ENCODE measurements at regions of chr20 and their contacts with region 1.

Region 1: DNA sequence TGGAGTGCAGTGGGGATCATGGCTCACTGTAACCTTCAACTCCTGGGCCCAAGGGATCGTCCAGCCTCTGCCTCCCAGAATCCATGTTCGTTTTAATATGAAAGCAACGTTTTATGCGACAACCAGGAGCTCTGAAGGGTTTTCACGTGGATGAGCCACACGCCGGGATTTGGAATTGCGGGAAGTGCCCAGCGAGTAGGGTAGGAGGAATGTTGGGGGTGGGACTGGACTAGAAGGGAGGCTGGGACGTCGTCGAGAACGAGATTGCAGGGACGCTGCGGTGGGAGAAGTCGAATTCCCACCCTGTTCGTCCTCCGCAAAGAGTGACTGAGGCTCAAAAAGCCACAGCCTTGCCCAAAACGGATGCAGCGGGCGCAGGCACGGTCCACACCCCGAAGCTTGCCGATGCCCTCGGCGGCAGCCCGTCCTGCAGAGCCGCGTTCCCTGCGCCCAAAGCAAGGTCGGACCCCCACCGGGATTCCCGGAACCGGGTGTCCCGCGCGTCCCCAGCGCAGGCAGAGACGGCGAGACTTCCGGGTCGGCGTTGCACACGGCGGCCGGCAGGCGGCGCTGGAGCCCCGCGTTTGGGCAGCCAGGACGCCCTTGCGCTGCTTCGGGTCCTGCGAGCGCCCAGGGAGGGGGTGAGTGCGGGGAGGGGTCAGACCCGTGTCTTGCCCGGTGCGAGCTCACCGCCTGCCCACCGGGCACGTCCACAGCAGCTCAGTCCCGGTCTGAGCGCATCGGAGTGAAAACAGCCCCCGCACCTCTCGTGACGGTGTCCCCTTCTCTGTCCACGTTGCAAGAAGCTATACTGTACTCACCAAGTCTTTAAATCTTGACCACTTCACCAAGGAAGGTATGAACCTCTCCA is 87.8 kb downstream of the DHX35 start:
- DNase-seq: peak; percentile 90 to 97
- H3K4me3 ChIP-seq: peak overlapping the region; percentile 88
- H3K4me3 Mint-ChIP-seq: peak overlapping the region; percentile 82
- H3K27ac Mint-ChIP-seq: peak overlapping the region; percentile 65
- H3K4me1 ChIP-seq: peaks cover 4% of the 10 kb centered on the region; the same call in 1 of the 2 replicates
- H3K4me1 Mint-ChIP-seq: no peaks in the 10 kb centered on the region
- H3K27me3 ChIP-seq: no peaks in the 10 kb centered on the region
- H3K27me3 Mint-ChIP-seq: peaks cover 13% of the 10 kb centered on the region
- CTCF ChIP-seq: peak; percentile 100

Region 2: GRCh38 chr20:38645980-38646858 is 403.7 kb before region 1 on chr20:
- CTCF ChIA-PET with region 1: no interaction called
- POLR2A ChIA-PET with region 1: no interaction called
- intact Hi-C with region 1: loop called (anchors 1 kb)
- DNase-seq: peak; percentile 85 to 97
- H3K4me3 ChIP-seq: peak overlapping the region; percentile 28
- H3K4me3 Mint-ChIP-seq: peak overlapping the region; percentile 69
- H3K27ac Mint-ChIP-seq: no peak overlapping the region
- H3K4me1 ChIP-seq: 0 out of 2 replicates have a peak, but pooled peaks cover 8% of the 10 kb centered on the region
- H3K4me1 Mint-ChIP-seq: no peaks in the 10 kb centered on the region
- H3K27me3 ChIP-seq: peaks cover 2% of the 10 kb centered on the region; the same call in 1 of the 2 replicates
- H3K27me3 Mint-ChIP-seq: peaks cover 19% of the 10 kb centered on the region
- CTCF ChIP-seq: peak; percentile 100

Region 3: DNA sequence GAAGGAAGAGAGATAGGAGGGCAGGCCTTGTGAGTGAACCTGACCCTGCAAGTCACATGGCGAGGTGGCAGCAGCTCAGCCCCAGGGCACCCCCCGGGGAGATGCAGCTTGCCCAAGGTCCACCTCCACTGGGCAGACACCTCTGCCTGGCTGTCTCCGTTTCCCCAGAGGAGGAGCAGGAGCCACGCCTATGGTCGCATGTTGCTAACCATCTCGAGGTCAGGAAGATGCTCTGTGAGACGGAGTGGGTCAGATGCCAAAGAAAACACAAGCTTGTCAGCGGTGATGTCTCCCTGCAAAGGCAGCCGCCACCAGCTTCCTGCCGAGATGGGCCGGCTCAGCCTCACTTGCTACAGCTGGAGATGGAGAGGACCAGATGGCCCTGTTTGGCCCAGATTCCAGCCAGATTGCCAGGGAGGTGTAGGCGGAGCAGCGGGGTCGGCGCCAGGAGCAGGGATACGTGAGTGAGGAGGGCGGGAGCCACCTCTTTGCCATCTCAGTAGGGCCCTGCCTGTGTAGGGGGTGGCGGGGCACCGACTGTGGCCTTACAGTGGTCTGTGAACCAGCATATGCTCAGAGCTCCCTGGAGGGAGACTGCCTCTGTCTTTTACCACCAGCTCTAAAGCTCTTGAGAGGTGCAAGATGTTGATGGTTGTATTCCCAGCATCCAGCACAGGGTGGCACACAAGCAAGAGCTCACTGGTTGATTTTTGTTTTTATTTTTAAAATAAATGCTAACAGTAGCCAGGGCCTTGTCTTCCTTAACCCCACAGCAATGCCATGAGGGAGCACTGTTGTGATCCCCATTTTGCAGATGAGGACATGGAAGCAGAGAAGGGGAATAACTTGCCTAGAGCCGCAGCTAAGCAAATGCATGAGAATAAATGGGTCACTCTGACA is 166.6 kb before region 1 on chr20:
- CTCF ChIA-PET with region 1: interaction called, 12 read pairs
- POLR2A ChIA-PET with region 1: no interaction called
- intact Hi-C with region 1: no loop called
- DNase-seq: no peak
- H3K4me3 ChIP-seq: no peak overlapping the region
- H3K4me3 Mint-ChIP-seq: no peak overlapping the region
- H3K27ac Mint-ChIP-seq: no peak overlapping the region
- H3K4me1 ChIP-seq: peaks cover 8% of the 10 kb centered on the region; the same call in 1 of the 2 replicates
- H3K4me1 Mint-ChIP-seq: no peaks in the 10 kb centered on the region
- H3K27me3 ChIP-seq: no peaks in the 10 kb centered on the region
- H3K27me3 Mint-ChIP-seq: peaks cover 23% of the 10 kb centered on the region
- CTCF ChIP-seq: peak in 1 of 2 experiments; percentile 11

Region 4: DNA sequence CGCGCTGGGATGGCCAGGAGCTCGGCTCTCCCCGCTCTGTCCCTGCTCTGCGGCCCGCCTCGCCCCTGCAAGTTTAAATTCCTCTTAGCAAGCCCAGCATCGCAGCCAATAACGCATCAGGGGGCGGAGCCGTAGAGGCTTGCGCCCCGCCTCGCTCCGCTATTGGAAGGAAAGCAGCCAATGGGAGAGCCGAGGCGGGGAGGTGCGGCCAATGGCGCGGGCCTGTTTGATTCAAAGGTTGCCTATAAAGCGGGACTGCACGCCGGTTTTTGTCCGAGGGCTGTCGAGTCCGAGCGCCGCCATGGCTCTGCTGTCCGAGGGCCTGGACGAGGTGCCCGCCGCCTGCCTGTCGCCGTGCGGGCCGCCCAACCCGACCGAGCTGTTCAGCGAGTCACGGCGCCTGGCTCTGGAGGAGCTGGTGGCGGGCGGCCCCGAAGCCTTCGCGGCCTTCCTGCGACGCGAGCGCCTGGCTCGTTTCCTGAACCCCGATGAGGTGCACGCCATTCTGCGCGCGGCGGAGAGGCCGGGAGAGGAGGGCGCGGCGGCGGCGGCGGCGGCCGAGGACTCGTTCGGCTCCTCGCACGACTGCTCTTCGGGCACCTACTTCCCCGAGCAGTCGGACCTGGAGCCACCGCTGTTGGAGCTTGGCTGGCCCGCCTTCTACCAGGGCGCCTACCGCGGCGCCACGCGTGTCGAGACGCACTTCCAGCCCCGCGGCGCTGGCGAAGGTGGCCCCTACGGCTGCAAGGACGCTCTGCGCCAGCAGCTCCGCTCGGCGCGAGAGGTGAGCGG is 123.6 kb before region 1 on chr20 and contains the start of gene FAM83D:
- CTCF ChIA-PET with region 1: interaction called, 11 read pairs
- POLR2A ChIA-PET with region 1: interaction called, 3 read pairs
- intact Hi-C with region 1: no loop called
- DNase-seq: peak; percentile 100
- H3K4me3 ChIP-seq: peak within 1 kb of the TSS; percentile 93
- H3K4me3 Mint-ChIP-seq: peak within 1 kb of the TSS; percentile 92
- H3K27ac Mint-ChIP-seq: peak within 1 kb of the TSS; percentile 89
- H3K4me1 ChIP-seq: peaks cover 14% of the 10 kb centered on the region
- H3K4me1 Mint-ChIP-seq: peaks cover 38% of the 10 kb centered on the region
- H3K27me3 ChIP-seq: no peaks in the 10 kb centered on the region
- H3K27me3 Mint-ChIP-seq: no peaks in the 10 kb centered on the region
- CTCF ChIP-seq: no peak
- total RNA-seq, gene FAM83D: 82.4 and 86.3 TPM in 2 replicates

Region 5: GRCh38 chr20:38962044-38962927 is 87.6 kb before region 1 on chr20 and contains the start of gene DHX35:
- CTCF ChIA-PET with region 1: interaction called, 21 read pairs
- POLR2A ChIA-PET with region 1: interaction called, 3 read pairs
- intact Hi-C with region 1: no loop called
- DNase-seq: peak; percentile 100
- H3K4me3 ChIP-seq: peak within 1 kb of the TSS; percentile 84
- H3K4me3 Mint-ChIP-seq: peak within 1 kb of the TSS; percentile 92
- H3K27ac Mint-ChIP-seq: peak within 1 kb of the TSS; percentile 96
- H3K4me1 ChIP-seq: peaks cover 14% of the 10 kb centered on the region; the same call in 1 of the 2 replicates
- H3K4me1 Mint-ChIP-seq: peaks cover 20% of the 10 kb centered on the region
- H3K27me3 ChIP-seq: no peaks in the 10 kb centered on the region
- H3K27me3 Mint-ChIP-seq: no peaks in the 10 kb centered on the region
- CTCF ChIP-seq: peak; percentile 30 to 76
- total RNA-seq, gene DHX35: 25.0 and 29.5 TPM in 2 replicates

Region 6: DNA sequence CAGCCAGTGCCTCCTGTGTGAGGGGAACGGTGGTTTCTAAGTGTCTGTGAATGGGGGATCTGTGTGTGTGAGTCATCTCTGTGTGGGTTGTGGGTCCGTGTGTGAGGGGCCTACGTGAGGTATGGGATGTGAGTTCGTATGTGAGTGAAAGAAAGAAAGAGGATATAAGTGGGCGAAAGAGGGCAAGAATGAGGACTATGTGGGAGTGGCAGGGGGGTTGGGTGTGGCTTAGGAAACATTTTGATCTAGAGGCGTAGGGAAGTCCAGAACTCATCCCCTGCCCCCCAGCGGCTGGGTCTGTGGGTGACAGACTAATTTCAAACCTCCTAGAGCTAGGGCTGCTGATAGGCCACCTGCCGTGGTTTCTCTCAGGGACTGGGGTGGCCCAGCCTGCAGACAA is 52.3 kb before region 1 on chr20:
- CTCF ChIA-PET with region 1: no interaction called
- POLR2A ChIA-PET with region 1: no interaction called
- intact Hi-C with region 1: no loop called
- DNase-seq: no peak
- H3K4me3 ChIP-seq: no peak overlapping the region
- H3K4me3 Mint-ChIP-seq: no peak overlapping the region
- H3K27ac Mint-ChIP-seq: peak overlapping the region; percentile 1
- H3K4me1 ChIP-seq: no peaks in the 10 kb centered on the region
- H3K4me1 Mint-ChIP-seq: no peaks in the 10 kb centered on the region
- H3K27me3 ChIP-seq: no peaks in the 10 kb centered on the region
- H3K27me3 Mint-ChIP-seq: no peaks in the 10 kb centered on the region
- CTCF ChIP-seq: no peak

Region 7: GRCh38 chr20:39070484-39071231 is 20.7 kb after region 1 on chr20:
- CTCF ChIA-PET with region 1: interaction called, 31 read pairs
- POLR2A ChIA-PET with region 1: interaction called, 3 read pairs
- intact Hi-C with region 1: no loop called
- DNase-seq: no peak
- H3K4me3 ChIP-seq: no peak overlapping the region
- H3K4me3 Mint-ChIP-seq: no peak overlapping the region
- H3K27ac Mint-ChIP-seq: no peak overlapping the region
- H3K4me1 ChIP-seq: no peaks in the 10 kb centered on the region
- H3K4me1 Mint-ChIP-seq: no peaks in the 10 kb centered on the region
- H3K27me3 ChIP-seq: peaks cover 2% of the 10 kb centered on the region; the same call in 1 of the 2 replicates
- H3K27me3 Mint-ChIP-seq: peaks cover 35% of the 10 kb centered on the region
- CTCF ChIP-seq: no peak

Region 8: DNA sequence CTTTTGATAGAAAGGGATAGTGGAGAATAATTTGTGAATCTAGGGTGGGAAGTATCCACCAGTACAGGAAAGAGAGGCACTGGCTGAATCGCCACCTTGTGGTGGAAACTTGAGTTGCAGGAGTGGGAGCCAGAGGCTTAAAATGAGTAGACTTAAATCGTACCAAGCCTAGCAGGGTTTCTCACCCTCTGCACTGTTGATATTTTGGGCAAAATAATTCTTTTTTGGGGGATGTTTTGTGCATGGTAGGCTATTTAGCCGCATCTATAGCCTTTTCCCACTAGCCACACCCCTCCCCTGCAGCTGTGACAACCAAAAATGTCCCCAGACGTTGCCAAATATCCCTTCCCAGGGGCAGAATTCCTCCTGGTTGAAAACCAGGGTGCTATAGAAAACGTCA is 31.3 kb after region 1 on chr20:
- CTCF ChIA-PET with region 1: interaction called, 74 read pairs
- POLR2A ChIA-PET with region 1: interaction called, 4 read pairs
- intact Hi-C with region 1: loop called (anchors 1 kb)
- DNase-seq: peak; percentile 88 to 93
- H3K4me3 ChIP-seq: no peak overlapping the region
- H3K4me3 Mint-ChIP-seq: no peak overlapping the region
- H3K27ac Mint-ChIP-seq: no peak overlapping the region
- H3K4me1 ChIP-seq: no peaks in the 10 kb centered on the region
- H3K4me1 Mint-ChIP-seq: no peaks in the 10 kb centered on the region
- H3K27me3 ChIP-seq: peaks cover 5% of the 10 kb centered on the region; the same call in 1 of the 2 replicates
- H3K27me3 Mint-ChIP-seq: peaks cover 30% of the 10 kb centered on the region
- CTCF ChIP-seq: peak; percentile 99

Measured in Caco-2 (cell line).